Activated naive CD8-positive, alpha-beta T cell treated with anti-CD3 and anti-CD28 coated beads, Interleukin-2, amount 10 ng/mL, durations not matched to agents 7 days and 5 days (primary cell): ENCODE measurements at regions of chr1 and their contacts with region 1.

Region 1: GRCh38 chr1:58941471-58942289 is 157.8 kb upstream of the JUN start:
- DNase-seq: peak; percentile 55
- ATAC-seq: peak; percentile 84
- H3K4me3 Mint-ChIP-seq: peak overlapping the region; percentile 74
- H3K27ac Mint-ChIP-seq: peak overlapping the region; percentile 82
- H3K4me1 Mint-ChIP-seq: peaks cover 57% of the 10 kb centered on the region
- H3K27me3 Mint-ChIP-seq: peaks cover 3% of the 10 kb centered on the region

Region 2: DNA sequence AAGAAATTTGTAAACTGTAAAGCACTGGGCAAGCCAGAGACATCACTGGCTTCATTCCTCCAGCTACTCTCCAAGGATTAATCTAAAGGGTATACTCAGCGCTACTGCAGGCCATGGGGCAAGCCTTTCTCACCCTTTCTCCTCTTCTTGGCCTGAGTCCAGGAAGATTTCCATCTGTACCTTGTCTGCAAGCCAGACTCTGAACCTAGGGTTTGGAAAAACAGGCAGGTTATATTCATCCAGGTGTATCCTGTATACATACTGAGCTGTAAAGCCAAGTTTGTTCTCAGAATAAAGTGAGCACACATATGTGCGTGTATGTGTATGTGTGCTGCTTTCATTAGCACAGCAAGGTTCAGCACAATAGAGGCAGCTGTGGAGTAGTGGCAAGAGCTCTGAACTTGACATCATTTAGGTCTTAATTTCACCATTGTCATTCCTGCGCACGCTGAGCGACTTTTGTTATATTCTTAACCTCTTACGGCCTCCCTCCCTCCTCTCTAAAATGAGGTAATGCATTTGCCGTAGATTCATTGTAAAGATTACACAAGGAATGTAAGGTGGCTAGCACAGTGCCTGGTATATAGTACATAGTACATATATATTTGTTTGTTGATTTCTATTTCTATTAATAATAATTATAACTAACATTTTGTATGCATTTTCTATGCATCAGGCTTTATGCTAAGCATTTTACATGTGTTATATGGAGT is 29.7 kb before region 1 on chr1:
- POLR2A ChIA-PET with region 1: no interaction called
- DNase-seq: no peak
- ATAC-seq: no peak
- H3K4me3 Mint-ChIP-seq: no peak overlapping the region
- H3K27ac Mint-ChIP-seq: no peak overlapping the region
- H3K4me1 Mint-ChIP-seq: no peaks in the 10 kb centered on the region
- H3K27me3 Mint-ChIP-seq: no peaks in the 10 kb centered on the region

Region 3: GRCh38 chr1:58968360-58968952 is 26.8 kb after region 1 on chr1:
- POLR2A ChIA-PET with region 1: interaction called, 22 read pairs
- DNase-seq: peak; percentile 55
- ATAC-seq: peak; percentile 80
- H3K4me3 Mint-ChIP-seq: peak overlapping the region; percentile 69
- H3K27ac Mint-ChIP-seq: peak overlapping the region; percentile 97
- H3K4me1 Mint-ChIP-seq: peaks cover 32% of the 10 kb centered on the region
- H3K27me3 Mint-ChIP-seq: peaks cover 3% of the 10 kb centered on the region

Region 4: GRCh38 chr1:59057211-59057694 is 115.6 kb after region 1 on chr1:
- POLR2A ChIA-PET with region 1: no interaction called
- DNase-seq: no peak
- ATAC-seq: no peak
- H3K4me3 Mint-ChIP-seq: no peak overlapping the region
- H3K27ac Mint-ChIP-seq: no peak overlapping the region
- H3K4me1 Mint-ChIP-seq: peaks cover 5% of the 10 kb centered on the region
- H3K27me3 Mint-ChIP-seq: no peaks in the 10 kb centered on the region